Prostate gland (tissue), 2 donors: ENCODE measurements at regions of chr4 and their contacts with region 1.

Region 1: DNA sequence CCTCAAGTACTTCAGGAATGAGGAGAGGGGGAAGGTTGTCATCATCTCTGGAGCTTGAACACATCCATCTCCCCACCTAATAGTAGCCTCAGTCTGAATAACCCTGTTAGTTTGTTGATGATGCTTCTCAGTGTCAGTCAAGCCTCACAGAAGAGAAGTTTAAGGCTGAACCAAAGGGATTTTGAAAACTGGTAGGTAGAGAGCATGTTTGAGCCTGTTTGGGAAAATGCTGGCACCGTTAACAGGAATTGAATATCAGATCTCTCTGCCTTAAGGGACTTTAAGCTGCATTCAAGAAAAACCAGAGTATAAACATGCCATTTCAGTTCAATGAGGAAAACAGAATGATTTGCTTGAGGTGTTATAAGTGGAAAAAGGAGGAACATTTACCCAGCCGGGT is 73.1 kb downstream of the MAPK10 start:
- DNase-seq: peak; percentile 70
- H3K4me3 ChIP-seq: no peak overlapping the region
- H3K27ac ChIP-seq: peak overlapping the region in 1 of 2 donors; percentile 27
- H3K4me1 ChIP-seq: no peaks in the 10 kb centered on the region
- H3K27me3 ChIP-seq: no peaks in the 10 kb centered on the region
- CTCF ChIP-seq: no peak
- POLR2A ChIP-seq: no peak

Region 2: DNA sequence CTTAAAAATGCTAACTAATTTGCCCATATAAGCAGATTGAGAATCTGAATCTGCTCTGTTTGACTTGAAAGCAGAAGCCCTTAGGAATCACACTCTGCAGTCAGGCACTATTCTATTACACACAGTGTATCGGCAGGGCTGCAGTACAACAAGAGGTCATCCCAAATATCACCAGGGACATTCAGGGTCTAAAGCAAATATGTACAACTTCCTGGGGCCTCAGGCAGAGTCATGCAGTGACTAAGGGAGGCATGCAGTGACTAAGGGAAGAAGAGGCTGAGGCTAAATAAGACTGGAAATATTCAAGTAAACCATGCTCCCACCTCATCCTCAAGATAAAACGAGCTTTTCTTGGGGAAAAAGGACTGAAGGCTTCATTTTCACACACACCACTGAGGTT is 52.3 kb after region 1 on chr4:
- intact Hi-C with region 1: loop called (anchors 10 kb)
- DNase-seq: no peak
- H3K4me3 ChIP-seq: no peak overlapping the region
- H3K27ac ChIP-seq: peak overlapping the region in 1 of 2 donors; percentile 52
- H3K4me1 ChIP-seq: peaks cover 3% of the 10 kb centered on the region
- H3K27me3 ChIP-seq: no peaks in the 10 kb centered on the region
- CTCF ChIP-seq: no peak
- POLR2A ChIP-seq: no peak